Body of pancreas (tissue), 4 donors: ENCODE measurements at regions of chr7 and their contacts with region 1.

Region 1: GRCh38 chr7:11427686-11428273 is 404.2 kb downstream of the THSD7A start:
- DNase-seq: peak in 1 of 4 donors; percentile 48
- ATAC-seq: peak; percentile 65
- H3K4me3 ChIP-seq: no peak overlapping the region
- H3K27ac ChIP-seq: no peak overlapping the region
- H3K4me1 ChIP-seq: no peaks in the 10 kb centered on the region
- H3K27me3 ChIP-seq: no peaks in the 10 kb centered on the region
- CTCF ChIP-seq: peak; percentile 42 to 89 (median 76)
- POLR2A ChIP-seq: no peak

Region 2: DNA sequence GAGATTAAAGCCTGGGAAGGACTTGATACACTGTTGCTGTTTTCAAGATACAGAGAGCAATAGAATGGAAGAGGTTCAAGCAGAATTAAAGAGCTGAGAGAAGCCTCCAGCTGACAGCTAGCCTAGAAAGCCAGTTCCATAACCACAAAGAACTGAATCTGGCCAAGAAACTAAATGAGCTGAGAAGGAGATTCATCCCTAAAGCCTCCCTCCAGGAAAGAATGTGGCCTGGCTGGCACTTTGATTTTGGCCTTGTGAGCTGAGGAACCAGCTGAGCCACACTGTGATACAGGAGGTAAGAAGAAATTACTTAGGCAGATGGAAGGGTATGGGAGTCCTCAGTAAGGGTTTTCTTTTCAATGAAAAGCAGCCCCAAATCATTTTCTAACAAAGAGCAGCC is 130.0 kb before region 1 on chr7:
- intact Hi-C with region 1: no loop called
- DNase-seq: no peak
- ATAC-seq: no peak
- H3K4me3 ChIP-seq: no peak overlapping the region
- H3K27ac ChIP-seq: no peak overlapping the region
- H3K4me1 ChIP-seq: no peaks in the 10 kb centered on the region
- H3K27me3 ChIP-seq: no peaks in the 10 kb centered on the region
- CTCF ChIP-seq: no peak
- POLR2A ChIP-seq: no peak

Region 3: GRCh38 chr7:11548532-11548931 is 120.8 kb after region 1 on chr7:
- intact Hi-C with region 1: no loop called
- DNase-seq: no peak
- ATAC-seq: no peak
- H3K4me3 ChIP-seq: no peak overlapping the region
- H3K27ac ChIP-seq: no peak overlapping the region
- H3K4me1 ChIP-seq: no peaks in the 10 kb centered on the region
- H3K27me3 ChIP-seq: no peaks in the 10 kb centered on the region
- CTCF ChIP-seq: no peak
- POLR2A ChIP-seq: no peak

Region 4: DNA sequence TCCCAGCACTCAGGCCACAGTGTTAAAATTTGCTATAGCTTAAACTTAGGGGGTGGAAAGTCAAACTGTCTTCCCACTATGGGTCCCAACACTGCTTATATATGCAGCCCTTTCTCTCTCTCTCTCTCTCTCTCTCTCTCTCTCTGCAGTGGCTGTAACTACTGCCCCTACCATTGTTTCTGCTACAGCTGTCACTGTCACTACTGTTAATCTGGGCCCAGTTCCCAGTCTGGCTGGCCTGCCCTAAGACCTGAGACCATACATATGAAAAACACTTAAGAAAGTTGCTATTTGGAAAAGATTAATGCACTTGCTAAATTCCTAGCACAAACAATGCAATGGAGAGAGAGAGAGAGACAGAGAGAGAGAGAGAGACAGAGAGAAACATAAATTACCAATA is 325.7 kb after region 1 on chr7:
- intact Hi-C with region 1: no loop called
- DNase-seq: peak in 1 of 4 donors; percentile 17
- ATAC-seq: no peak
- H3K4me3 ChIP-seq: no peak overlapping the region
- H3K27ac ChIP-seq: no peak overlapping the region
- H3K4me1 ChIP-seq: no peaks in the 10 kb centered on the region
- H3K27me3 ChIP-seq: no peaks in the 10 kb centered on the region
- CTCF ChIP-seq: no peak
- POLR2A ChIP-seq: no peak

Region 5: DNA sequence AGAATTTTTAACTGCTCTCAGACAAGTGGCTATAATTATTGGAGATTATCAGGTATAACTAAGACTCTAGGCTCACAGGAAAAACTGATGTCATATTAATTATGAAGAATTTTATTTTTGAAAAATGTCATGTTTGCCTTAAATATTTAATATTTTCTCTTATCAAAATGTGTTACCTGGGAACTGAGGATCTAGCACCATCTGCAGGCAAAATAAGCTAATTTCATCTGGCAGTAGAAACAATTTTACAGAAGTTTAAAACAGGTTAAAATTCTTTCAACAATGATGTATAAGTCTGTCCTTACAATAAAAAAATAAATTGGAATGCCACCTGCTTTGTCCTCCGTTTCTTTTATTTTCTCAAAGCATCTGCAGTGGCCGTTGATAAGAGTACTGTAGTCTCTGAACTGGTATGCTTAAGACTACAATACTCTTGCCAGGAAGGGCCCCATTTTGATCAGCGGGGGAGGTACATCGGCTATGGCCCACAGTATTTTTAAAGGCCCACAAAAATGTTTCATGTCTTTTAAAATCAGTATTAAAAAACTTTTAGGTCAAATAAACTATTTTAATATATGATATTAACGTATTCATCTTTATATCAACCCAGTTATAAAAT is 894.6 kb after region 1 on chr7:
- intact Hi-C with region 1: loop called (anchors 10 kb)
- DNase-seq: no peak
- ATAC-seq: no peak
- H3K4me3 ChIP-seq: no peak overlapping the region
- H3K27ac ChIP-seq: no peak overlapping the region
- H3K4me1 ChIP-seq: peaks cover 5% of the 10 kb centered on the region
- H3K27me3 ChIP-seq: no peaks in the 10 kb centered on the region
- CTCF ChIP-seq: peak; percentile 53 to 85 (median 77)
- POLR2A ChIP-seq: no peak